ENCODE measurements at regions of chr9 and their contacts with region 1.

Region 1: DNA sequence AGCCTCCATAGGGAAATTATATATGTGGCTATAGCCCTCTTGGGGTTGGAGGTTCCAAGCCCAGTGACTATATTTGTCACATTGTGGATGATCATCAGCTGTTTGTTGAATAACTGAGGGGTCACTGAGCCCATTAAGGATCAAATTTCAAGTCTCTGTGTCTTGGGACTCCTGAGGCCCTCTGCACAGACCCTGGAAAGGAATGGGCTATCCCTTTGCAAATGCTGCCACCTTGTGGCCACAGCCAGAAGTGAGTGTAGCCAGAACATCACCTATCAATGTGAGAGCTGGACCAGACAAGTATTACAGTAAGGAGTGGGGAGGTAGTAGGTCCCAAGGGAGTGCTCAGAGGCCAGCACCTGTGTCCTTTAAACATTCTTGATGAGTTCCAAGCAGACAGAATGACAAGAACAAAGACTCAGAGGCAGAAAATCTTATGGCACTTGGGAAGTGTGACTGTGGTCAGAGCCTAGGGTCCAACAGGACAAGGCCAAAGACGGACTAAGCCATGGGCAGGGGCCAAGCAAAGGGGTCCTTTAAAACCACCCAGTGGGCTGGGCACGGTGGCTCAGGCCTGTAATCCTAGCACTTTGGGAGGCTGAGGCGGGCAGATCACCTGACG is 8.2 kb downstream of the RPP25L start:
- DNase-seq: peak; percentile 71 to 94
- ATAC-seq: peak; percentile 82 to 96
- H3K4me3 ChIP-seq: no peak overlapping the region
- H3K27ac ChIP-seq: no peak overlapping the region
- H3K4me1 ChIP-seq: peaks cover 5% of the 10 kb centered on the region; the same call in 1 of the 3 replicates
- CTCF ChIP-seq: peak; percentile 95
- EP300 ChIP-seq: no peak
- POLR2A ChIP-seq: no peak
- RAD21 ChIP-seq: peak; percentile 88 to 96

Region 2: GRCh38 chr9:34376596-34377403 is 226.9 kb before region 1 on chr9 and contains the start of gene MYORG:
- CTCF ChIA-PET with region 1: interaction called, 18 read pairs
- POLR2A ChIA-PET with region 1: no interaction called
- DNase-seq: peak; percentile 96 to 98
- ATAC-seq: peak; percentile 78 to 89
- H3K4me3 ChIP-seq: peak within 1 kb of the TSS; percentile 79
- H3K27ac ChIP-seq: peak within 1 kb of the TSS; percentile 63 to 85
- H3K4me1 ChIP-seq: peaks cover 30% of the 10 kb centered on the region
- CTCF ChIP-seq: no peak
- EP300 ChIP-seq: no peak
- POLR2A ChIP-seq: peak; percentile 50
- RAD21 ChIP-seq: no peak
- polyA plus RNA-seq, gene MYORG: 2.2 and 3.7 TPM in 2 replicates

Region 3: GRCh38 chr9:34458013-34458958 is 145.4 kb before region 1 on chr9 and contains the starts of genes DNAI1 and FAM219A:
- CTCF ChIA-PET with region 1: interaction called, 10 read pairs
- POLR2A ChIA-PET with region 1: no interaction called
- DNase-seq: peak; percentile 94 to 98
- ATAC-seq: peak; percentile 92 to 95
- H3K4me3 ChIP-seq: peak within 1 kb of the TSS; percentile 87
- H3K27ac ChIP-seq: peak within 1 kb of the TSS; percentile 84 to 94
- H3K4me1 ChIP-seq: peaks cover 17% of the 10 kb centered on the region; the same call in 2 of the 3 replicates
- CTCF ChIP-seq: no peak
- EP300 ChIP-seq: no peak
- POLR2A ChIP-seq: peak; percentile 78
- RAD21 ChIP-seq: no peak
- polyA plus RNA-seq, gene DNAI1: 0.16 and 0.27 TPM in 2 replicates
- polyA plus RNA-seq, gene FAM219A: 8.1 and 10.4 TPM in 2 replicates

Region 4: DNA sequence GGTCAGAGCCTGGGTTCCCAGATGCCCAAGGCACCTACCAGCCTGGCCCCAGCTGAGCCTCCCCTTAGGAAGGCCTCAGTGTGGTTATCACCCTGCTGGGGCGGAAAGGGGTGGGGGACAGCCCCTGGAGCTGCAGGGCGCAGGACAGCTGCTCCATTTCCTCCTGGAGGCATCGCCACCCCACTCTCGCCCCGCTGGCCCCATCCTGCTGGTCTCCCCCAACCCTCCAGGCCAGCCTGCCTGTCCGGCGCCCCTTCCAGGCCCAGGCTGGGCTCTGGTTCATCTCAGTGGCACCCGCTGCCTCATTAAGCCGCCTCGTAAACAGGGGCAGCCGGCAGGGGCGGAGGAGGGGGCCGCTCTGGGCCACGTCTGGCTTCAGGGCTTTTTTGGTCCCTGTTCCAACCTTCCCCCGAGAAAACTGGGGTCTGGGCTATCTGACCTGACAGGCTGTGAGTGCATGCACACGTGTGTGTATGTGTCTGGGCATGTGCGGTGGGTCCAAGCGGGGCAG is 50.2 kb before region 1 on chr9:
- CTCF ChIA-PET with region 1: interaction called, 297 read pairs
- POLR2A ChIA-PET with region 1: no interaction called
- DNase-seq: no peak
- ATAC-seq: no peak
- H3K4me3 ChIP-seq: no peak overlapping the region
- H3K27ac ChIP-seq: no peak overlapping the region
- H3K4me1 ChIP-seq: no peaks in the 10 kb centered on the region
- CTCF ChIP-seq: no peak
- EP300 ChIP-seq: no peak
- POLR2A ChIP-seq: no peak
- RAD21 ChIP-seq: no peak

Region 5: DNA sequence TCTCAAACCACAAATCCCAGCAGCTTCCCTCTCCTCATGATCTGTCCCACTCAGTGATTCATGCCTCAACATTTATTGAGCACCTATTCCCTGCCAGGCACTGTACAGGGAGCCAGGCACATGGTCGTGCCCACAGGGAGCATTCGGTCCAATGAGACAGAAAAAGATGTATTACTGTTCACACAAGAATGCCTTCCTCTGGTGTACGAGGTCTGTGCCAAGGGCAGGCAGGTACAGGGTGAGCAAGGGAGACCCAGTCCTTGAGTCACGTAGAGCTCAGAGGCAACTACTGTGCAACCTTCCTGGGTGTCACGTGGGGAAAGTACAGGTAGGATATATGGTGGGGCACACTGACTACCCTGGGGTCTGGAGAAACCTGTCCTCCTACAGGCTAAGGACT is 18.8 kb before region 1 on chr9:
- CTCF ChIA-PET with region 1: interaction called, 25 read pairs
- POLR2A ChIA-PET with region 1: no interaction called
- DNase-seq: no peak
- ATAC-seq: no peak; a peak in 1 of 6 replicates
- H3K4me3 ChIP-seq: no peak overlapping the region
- H3K27ac ChIP-seq: no peak overlapping the region
- H3K4me1 ChIP-seq: peaks cover 7% of the 10 kb centered on the region; the same call in 2 of the 3 replicates
- CTCF ChIP-seq: no peak
- EP300 ChIP-seq: no peak
- POLR2A ChIP-seq: no peak
- RAD21 ChIP-seq: no peak